MCF 10A (cell line): ENCODE measurements at regions of chr13 and their contacts with region 1.

Region 1: DNA sequence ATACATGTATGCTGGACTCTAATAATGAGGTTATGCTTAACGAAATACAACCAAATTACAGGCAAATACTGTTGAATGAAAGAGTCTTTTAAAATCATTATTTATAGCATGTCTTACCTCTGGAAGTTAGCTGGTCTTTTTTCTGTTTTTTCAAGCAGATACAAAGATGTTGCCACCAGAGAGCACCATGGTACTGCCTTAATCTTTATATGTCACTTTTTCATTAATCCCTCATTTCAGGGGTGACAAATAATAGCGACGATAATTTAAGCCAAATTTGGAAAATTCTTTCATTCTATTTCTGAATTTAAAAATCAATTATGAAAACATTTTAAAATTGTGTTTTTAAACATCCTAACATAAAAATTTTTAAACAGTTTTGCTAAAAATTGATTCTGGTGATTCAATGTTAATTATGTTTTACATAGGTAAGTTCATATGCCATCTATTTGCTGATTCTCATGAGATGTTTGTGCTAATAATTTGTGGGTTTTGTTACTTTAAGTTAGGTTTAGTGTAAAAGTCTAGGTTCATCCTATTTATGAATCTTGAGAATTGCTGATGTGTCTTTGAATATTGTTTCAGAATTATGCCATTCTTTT is 379.3 kb upstream of the SGCG start:
- DNase-seq: no peak
- H3K4me3 Mint-ChIP-seq: no peak overlapping the region
- H3K27ac Mint-ChIP-seq: no peak overlapping the region
- H3K4me1 Mint-ChIP-seq: no peaks in the 10 kb centered on the region
- H3K27me3 Mint-ChIP-seq: no peaks in the 10 kb centered on the region
- CTCF ChIP-seq: peak; percentile 47

Region 2: GRCh38 chr13:21111546-21111945 is 1690.0 kb before region 1 on chr13:
- CTCF ChIA-PET with region 1: interaction called, 3 read pairs
- POLR2A ChIA-PET with region 1: no interaction called
- intact Hi-C with region 1: loop called (anchors 5 kb)
- DNase-seq: no peak
- H3K4me3 Mint-ChIP-seq: no peak overlapping the region
- H3K27ac Mint-ChIP-seq: no peak overlapping the region
- H3K4me1 Mint-ChIP-seq: no peaks in the 10 kb centered on the region
- H3K27me3 Mint-ChIP-seq: no peaks in the 10 kb centered on the region
- CTCF ChIP-seq: no peak

Region 3: DNA sequence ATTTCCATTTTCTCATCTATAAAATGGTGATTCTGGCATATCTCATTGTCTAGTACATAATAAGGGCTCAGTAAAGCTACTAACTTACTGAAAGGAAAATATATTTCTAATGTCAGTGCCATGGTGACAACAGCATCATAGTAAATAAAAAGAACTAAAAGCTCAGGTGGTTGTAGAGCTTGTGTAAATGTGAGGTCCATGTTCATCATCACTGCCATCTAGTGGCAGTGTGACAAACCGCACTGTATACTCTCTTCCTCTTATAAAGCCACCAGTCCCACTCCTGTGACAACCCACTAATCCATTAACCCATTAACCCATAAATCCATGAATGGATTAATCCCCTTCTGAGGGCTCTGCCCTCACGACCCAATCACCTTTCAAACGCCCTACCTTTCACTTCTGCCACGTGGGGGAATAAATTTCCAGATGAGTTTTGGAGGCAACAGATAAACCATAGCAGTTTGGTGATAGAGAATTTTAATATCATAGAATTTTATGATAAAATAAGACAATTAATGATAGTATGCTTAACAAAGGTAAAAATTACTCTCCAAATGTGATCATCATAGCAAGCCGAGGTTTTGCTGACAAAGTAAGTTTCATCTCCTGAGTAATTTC is 218.8 kb after region 1 on chr13:
- CTCF ChIA-PET with region 1: interaction called, 7 read pairs
- POLR2A ChIA-PET with region 1: interaction called, 4 read pairs
- intact Hi-C with region 1: loop called (anchors 1 kb)
- DNase-seq: peak; percentile 46
- H3K4me3 Mint-ChIP-seq: no peak overlapping the region
- H3K27ac Mint-ChIP-seq: no peak overlapping the region
- H3K4me1 Mint-ChIP-seq: peaks cover 6% of the 10 kb centered on the region
- H3K27me3 Mint-ChIP-seq: no peaks in the 10 kb centered on the region
- CTCF ChIP-seq: peak; percentile 72

Region 4: DNA sequence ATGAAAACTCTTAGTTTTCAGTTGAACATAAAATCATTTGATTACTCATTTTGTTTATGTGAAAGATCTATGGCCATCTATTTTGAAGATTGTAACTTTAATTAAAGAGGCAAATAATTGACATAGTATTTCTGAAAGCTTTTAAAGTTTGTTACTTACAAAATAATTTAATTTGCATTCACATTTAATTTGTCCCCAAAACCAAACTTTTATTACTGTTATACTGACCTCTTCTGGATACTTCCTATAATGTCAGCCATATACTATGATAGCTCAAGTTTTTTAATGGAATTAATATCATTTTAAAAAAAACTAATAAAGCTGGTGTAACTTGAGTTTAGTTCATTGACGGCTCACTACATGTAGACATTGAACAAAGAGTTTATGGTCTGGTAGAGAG is 374.4 kb after region 1 on chr13:
- CTCF ChIA-PET with region 1: interaction called, 17 read pairs
- POLR2A ChIA-PET with region 1: interaction called, 6 read pairs
- intact Hi-C with region 1: loop called (anchors 1 kb)
- DNase-seq: no peak
- H3K4me3 Mint-ChIP-seq: no peak overlapping the region
- H3K27ac Mint-ChIP-seq: no peak overlapping the region
- H3K4me1 Mint-ChIP-seq: no peaks in the 10 kb centered on the region
- H3K27me3 Mint-ChIP-seq: no peaks in the 10 kb centered on the region
- CTCF ChIP-seq: peak; percentile 32

Region 5: DNA sequence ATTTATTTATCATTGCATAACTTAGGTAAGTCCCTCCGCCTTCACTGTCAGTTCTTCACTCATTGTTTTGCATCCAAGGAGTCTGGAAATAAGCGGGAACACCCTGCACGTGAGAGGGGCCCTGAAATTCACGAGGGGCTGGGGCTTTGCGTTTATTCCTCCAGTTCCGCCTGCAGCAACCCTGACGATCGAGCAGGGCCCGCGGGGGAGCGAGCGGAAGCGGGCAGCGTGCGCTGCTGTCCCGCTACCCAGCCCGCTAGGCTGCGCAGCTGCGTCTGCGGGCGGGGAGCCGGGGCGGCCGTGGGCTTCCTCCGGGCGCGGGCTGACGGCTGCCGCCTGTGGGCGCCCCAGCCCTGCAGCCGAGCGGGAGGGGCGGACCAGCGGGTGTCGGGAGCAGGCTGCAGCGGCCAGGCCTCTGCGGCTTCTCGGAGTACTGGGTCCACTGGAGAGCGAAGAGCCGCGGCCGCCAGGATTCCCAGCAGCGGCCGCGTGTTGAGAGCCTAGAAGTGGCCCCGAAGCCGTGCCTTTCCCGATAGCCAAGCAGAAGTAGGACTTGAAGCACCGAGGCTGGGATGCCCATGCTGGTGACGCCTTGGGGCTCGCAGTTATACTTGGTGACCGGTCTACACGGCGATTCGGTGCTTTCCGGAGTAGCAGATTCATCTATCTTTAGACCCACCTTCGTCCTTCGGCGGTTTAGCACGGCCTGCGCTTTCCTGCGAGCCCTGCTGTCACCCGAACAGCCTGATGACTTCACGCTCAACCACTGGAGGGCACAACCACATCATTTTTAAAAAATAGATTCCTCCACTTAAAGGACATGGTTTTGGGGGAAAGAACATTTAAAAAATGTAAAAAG is 664.9 kb after region 1 on chr13:
- CTCF ChIA-PET with region 1: interaction called, 3 read pairs
- POLR2A ChIA-PET with region 1: no interaction called
- intact Hi-C with region 1: loop called (anchors 10 kb)
- DNase-seq: peak; percentile 73
- H3K4me3 Mint-ChIP-seq: peak overlapping the region; percentile 73
- H3K27ac Mint-ChIP-seq: peak overlapping the region; percentile 31
- H3K4me1 Mint-ChIP-seq: peaks cover 5% of the 10 kb centered on the region
- H3K27me3 Mint-ChIP-seq: peaks cover 18% of the 10 kb centered on the region
- CTCF ChIP-seq: peak; percentile 53